Colonic mucosa (tissue), 4 donors: ENCODE measurements at regions of chr2 and their contacts with region 1.

Region 1: DNA sequence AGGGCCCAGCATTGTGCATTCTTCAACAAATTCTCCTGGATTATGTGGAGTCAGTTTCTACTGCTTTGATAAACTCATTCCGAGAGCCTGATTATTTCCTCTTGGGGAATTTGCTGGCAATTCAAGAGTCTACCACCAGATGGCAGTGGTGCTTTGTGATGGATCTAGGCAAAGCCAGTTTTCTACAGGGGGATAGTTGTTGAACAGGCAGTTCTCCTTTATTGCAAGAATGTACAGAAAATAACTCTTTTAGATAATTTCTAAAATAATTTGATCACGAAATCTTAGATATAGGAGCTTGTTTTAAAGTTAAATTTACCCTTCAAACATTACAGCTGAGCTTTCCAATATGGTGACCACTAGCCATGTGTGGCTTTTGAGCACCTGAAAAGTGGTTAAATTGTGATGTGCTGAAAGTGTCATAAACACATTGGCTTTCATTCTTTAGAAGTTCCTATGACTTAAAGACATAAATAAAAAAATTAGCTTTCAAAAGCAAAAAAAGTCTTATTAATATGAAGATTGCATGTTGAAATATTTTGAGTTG is 66.7 kb upstream of the HAAO start:
- DNase-seq: peak; percentile 92
- H3K4me3 ChIP-seq: no peak overlapping the region
- H3K27ac ChIP-seq: no peak overlapping the region
- H3K4me1 ChIP-seq: no peaks in the 10 kb centered on the region
- H3K27me3 ChIP-seq: no peaks in the 10 kb centered on the region
- CTCF ChIP-seq: peak; percentile 93

Region 2: GRCh38 chr2:42935692-42936681 is 76.9 kb after region 1 on chr2:
- intact Hi-C with region 1: loop called (anchors 5 kb)
- DNase-seq: no peak
- H3K4me3 ChIP-seq: no peak overlapping the region
- H3K27ac ChIP-seq: no peak overlapping the region
- H3K4me1 ChIP-seq: peaks cover 12% of the 10 kb centered on the region
- H3K27me3 ChIP-seq: no peaks in the 10 kb centered on the region
- CTCF ChIP-seq: no peak

Region 3: GRCh38 chr2:42974721-42975717 is 115.9 kb after region 1 on chr2:
- intact Hi-C with region 1: no loop called
- DNase-seq: peak; percentile 86
- H3K4me3 ChIP-seq: peak overlapping the region; percentile 19
- H3K27ac ChIP-seq: peak overlapping the region; percentile 30
- H3K4me1 ChIP-seq: peaks cover 6% of the 10 kb centered on the region
- H3K27me3 ChIP-seq: no peaks in the 10 kb centered on the region
- CTCF ChIP-seq: peak; percentile 86

Region 4: GRCh38 chr2:43239981-43240761 is 381.1 kb after region 1 on chr2:
- intact Hi-C with region 1: loop called (anchors 10 kb)
- DNase-seq: no peak
- H3K4me3 ChIP-seq: no peak overlapping the region
- H3K27ac ChIP-seq: peak overlapping the region; percentile 25
- H3K4me1 ChIP-seq: no peaks in the 10 kb centered on the region
- H3K27me3 ChIP-seq: no peaks in the 10 kb centered on the region
- CTCF ChIP-seq: no peak